Activated CD4-positive, alpha-beta T cell treated with anti-CD3 and anti-CD28 coated beads, Interleukin-2, amount 10 ng/mL, durations not matched to agents 24 days and 14 days (primary cell): ENCODE measurements at regions of chr1 and their contacts with region 1.

Region 1: GRCh38 chr1:204494281-204495077 is at the start of gene PIK3C2B:
- DNase-seq: peak; percentile 92
- H3K4me3 Mint-ChIP-seq: peak within 1 kb of the TSS; percentile 98
- H3K27ac Mint-ChIP-seq: peak within 1 kb of the TSS; percentile 96
- H3K4me1 Mint-ChIP-seq: peaks cover 45% of the 10 kb centered on the region
- H3K27me3 Mint-ChIP-seq: peaks cover 2% of the 10 kb centered on the region
- total RNA-seq, gene PIK3C2B: 22.7 and 23.6 TPM in 2 replicates

Region 2: DNA sequence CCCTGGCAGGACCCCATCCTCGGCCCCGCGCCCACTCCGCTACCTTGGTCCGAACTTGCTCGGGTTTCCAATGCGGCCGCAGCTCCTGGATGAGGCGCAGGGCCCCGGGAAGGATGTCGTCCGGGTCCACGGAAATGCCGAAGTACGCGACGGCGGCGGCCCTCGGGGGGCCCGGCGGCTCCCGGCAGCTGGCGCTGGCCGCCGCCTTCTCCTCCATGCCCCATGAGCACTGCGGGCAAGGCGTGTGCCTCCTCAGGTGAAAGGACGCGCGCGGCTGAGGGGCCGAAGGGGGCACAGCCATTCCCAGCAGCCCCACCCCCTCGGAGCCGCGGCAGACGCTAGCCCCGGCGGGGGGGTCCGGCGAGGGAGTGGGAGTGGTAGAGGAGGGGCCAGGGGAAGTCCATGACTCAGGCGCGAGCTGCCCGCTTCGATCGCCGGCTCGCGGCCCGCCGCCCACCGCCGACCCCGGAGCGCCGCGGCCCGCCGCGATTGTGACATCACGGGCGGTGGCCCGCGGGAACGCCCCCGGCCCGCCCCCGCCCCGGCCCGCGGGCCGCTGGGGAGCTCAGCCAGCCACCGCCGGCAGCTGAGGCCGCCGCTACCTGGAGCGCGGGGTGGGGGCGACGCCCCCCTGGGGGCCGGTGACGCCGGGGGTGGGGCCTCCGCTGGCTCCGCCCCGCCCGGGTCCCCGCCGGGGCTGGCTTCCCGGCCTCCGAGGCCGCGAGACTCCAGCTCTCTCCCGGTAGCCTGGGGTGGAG is 342.7 kb before region 1 on chr1 and contains the start of gene ETNK2:
- intact Hi-C with region 1: loop called (anchors 5 kb)
- DNase-seq: peak; percentile 78
- H3K4me3 Mint-ChIP-seq: peak within 1 kb of the TSS; percentile 74
- H3K27ac Mint-ChIP-seq: no peak within 1 kb of the TSS
- H3K4me1 Mint-ChIP-seq: no peaks in the 10 kb centered on the region
- H3K27me3 Mint-ChIP-seq: peaks cover 21% of the 10 kb centered on the region
- total RNA-seq, gene ETNK2: 0.07 TPM in 1 of 2 replicates, not detected in the other

Region 3: DNA sequence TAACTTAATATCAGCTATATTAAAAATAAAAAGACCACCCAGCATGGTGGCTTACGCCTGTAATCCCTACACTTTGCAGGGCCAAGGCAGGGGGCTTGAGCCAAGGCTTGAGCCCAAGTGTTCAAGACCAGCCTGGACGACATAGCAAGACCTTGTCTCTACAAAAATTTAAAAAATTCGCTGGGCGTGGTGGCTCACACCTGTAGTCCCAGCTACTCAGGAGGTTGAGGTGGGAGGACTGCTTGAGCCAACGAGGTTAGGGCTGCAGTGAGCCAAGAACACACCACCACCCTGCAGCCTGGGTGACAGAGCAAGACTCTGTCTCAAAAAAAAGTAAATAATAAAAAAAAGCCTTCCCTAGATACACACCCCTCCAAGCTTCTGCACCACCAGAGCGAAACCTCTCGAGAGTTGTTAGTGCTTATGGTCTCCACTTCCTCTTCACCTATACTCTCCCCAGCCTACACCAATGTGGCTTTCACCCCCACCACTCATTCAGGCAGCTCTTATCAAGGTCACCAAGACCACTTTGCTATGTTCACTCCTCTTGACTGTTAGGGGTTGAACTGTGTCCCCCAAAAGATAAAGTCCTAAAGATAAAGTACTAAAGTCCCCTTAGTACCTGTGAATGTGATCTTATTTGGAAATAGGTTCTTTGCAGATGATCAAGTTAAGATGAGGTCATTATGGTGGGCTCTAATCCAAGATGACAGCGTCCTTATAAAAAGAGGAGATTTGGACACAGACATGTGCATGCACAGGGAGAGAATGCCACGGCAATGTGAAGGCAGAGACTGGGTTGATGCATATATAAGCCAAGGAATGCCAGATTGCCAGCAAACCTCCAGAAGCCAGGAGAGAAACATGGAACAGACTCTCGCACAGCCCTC is 76.1 kb before region 1 on chr1:
- intact Hi-C with region 1: no loop called
- DNase-seq: no peak
- H3K4me3 Mint-ChIP-seq: no peak overlapping the region
- H3K27ac Mint-ChIP-seq: no peak overlapping the region
- H3K4me1 Mint-ChIP-seq: peaks cover 32% of the 10 kb centered on the region
- H3K27me3 Mint-ChIP-seq: no peaks in the 10 kb centered on the region

Region 4: GRCh38 chr1:204453141-204453772 is 41.2 kb before region 1 on chr1:
- intact Hi-C with region 1: loop called (anchors 2 kb)
- DNase-seq: peak; percentile 88
- H3K4me3 Mint-ChIP-seq: peak overlapping the region; percentile 79
- H3K27ac Mint-ChIP-seq: peak overlapping the region; percentile 90
- H3K4me1 Mint-ChIP-seq: peaks cover 33% of the 10 kb centered on the region
- H3K27me3 Mint-ChIP-seq: no peaks in the 10 kb centered on the region

Region 5: GRCh38 chr1:204858363-204858821 is 363.9 kb after region 1 on chr1:
- intact Hi-C with region 1: no loop called
- DNase-seq: no peak
- H3K4me3 Mint-ChIP-seq: no peak overlapping the region
- H3K27ac Mint-ChIP-seq: no peak overlapping the region
- H3K4me1 Mint-ChIP-seq: no peaks in the 10 kb centered on the region
- H3K27me3 Mint-ChIP-seq: peaks cover 13% of the 10 kb centered on the region